Dendritic cell treated with granulocyte-macrophage colony-stimulating factor and Interleukin-4, amounts not matched to agents 40 ng/mL and 50 ng/mL, for 4 days (primary cell): ENCODE measurements at regions of chr3 and their contacts with region 1.

Region 1: DNA sequence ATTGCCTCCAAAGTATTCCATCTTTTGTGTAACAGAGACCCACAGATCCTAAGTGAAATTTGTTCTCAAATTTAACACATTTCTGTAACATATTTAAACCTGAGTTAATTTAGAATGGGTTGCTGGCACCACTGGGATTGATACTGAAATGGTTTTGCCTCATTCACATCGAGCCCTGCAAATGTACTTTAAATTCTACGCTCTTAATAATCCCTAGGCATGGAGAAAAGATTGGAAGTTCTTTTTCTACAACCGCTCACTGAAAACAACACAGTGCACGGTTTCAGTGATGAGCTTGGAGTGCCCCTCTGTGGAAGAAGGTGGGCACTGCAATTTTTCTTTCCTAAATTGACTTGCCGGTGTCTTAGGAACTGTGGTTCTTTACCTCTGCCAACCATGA is 109.9 kb upstream of the ATP11B start:
- H3K4me3 Mint-ChIP-seq: no peak overlapping the region
- H3K27ac Mint-ChIP-seq: no peak overlapping the region
- H3K4me1 Mint-ChIP-seq: peaks cover 15% of the 10 kb centered on the region
- H3K27me3 Mint-ChIP-seq: peaks cover 67% of the 10 kb centered on the region

Region 2: GRCh38 chr3:181326637-181327223 is 1356.7 kb before region 1 on chr3:
- intact Hi-C with region 1: loop called (anchors 2 kb)
- H3K4me3 Mint-ChIP-seq: no peak overlapping the region
- H3K27ac Mint-ChIP-seq: no peak overlapping the region
- H3K4me1 Mint-ChIP-seq: no peaks in the 10 kb centered on the region
- H3K27me3 Mint-ChIP-seq: no peaks in the 10 kb centered on the region

Region 3: DNA sequence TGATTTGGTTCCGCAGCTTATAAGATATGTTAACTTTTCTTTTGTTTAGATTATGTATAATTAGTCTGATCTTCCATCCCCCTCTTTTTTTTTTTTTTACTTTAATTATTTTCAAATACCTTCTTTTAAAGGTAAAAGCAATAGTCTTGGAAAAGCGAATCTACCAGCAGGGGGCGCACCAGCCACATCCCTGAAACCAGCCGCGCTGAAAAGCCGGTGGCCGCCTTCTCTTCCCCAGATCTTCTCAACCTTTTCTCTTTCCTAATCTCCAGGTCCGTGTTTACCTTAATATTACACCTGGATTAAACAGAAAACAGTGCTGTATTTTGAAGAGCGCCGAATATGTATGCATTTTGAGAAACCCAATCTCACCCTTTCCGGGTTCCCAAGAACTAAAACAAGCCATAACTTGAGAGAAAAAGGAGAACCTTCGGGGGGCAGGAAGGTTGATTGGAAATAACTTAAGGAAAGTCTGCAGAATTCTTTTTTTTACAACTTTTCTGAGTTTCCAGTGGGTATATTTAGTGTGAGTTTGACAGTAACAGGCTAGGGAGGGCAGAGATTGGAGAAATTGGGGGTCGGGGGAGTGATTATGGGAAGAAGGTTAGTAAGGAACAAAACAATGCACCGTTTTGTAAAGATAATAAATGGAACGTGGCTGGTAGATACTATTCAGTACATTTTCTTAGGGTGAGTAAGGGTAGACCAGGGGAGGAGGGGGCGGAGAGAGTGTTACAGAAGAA is 973.7 kb before region 1 on chr3:
- intact Hi-C with region 1: loop called (anchors 1 kb)
- H3K4me3 Mint-ChIP-seq: peak overlapping the region; percentile 71
- H3K27ac Mint-ChIP-seq: no peak overlapping the region
- H3K4me1 Mint-ChIP-seq: peaks cover 25% of the 10 kb centered on the region
- H3K27me3 Mint-ChIP-seq: peaks cover 60% of the 10 kb centered on the region